ENCODE measurements at regions of chr5 and their contacts with region 1.

Region 1: GRCh38 chr5:140547508-140548299 is at the start of gene EIF4EBP3:
- DNase-seq: peak; percentile 98
- H3K4me3 ChIP-seq: peak within 1 kb of the TSS; percentile 70
- H3K27ac ChIP-seq: peak within 1 kb of the TSS; percentile 97
- H3K4me1 ChIP-seq: peaks cover 48% of the 10 kb centered on the region
- H3K27me3 ChIP-seq: no peaks in the 10 kb centered on the region
- CTCF ChIP-seq: peak; percentile 76
- total RNA-seq, gene EIF4EBP3: 13.1 TPM

Region 2: DNA sequence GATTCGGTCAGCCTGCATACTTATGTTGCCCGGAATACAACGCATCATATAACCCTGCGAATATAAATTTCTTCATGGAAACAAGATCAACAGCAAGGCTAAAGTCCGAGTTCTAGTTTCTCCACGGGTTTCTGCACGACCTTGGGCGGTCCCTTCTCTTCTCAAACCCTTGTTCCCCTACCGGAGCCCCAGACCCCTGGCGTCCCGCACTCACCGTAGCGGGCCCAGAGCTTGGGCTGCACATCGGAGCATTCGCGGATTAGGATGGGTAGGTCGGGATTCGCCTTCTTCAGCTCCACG is 99.3 kb after region 1 on chr5:
- intact Hi-C with region 1: loop called (anchors 10 kb)
- DNase-seq: no peak
- H3K4me3 ChIP-seq: peak overlapping the region; percentile 87
- H3K27ac ChIP-seq: peak overlapping the region; percentile 90
- H3K4me1 ChIP-seq: peaks cover 65% of the 10 kb centered on the region
- H3K27me3 ChIP-seq: no peaks in the 10 kb centered on the region
- CTCF ChIP-seq: no peak

Measured in left ventricle myocardium inferior (tissue), 1 donor.